Endothelial cell of umbilical vein (primary cell): ENCODE measurements at regions of chr13 and their contacts with region 1.

Region 1: GRCh38 chr13:28718543-28719226 is at the start of gene SLC46A3:
- DNase-seq: peak; percentile 99
- H3K4me3 ChIP-seq: peak within 1 kb of the TSS; percentile 43 to 61 (median 48)
- H3K27ac ChIP-seq: peak within 1 kb of the TSS; percentile 6
- H3K4me1 ChIP-seq: peaks cover 30% of the 10 kb centered on the region
- H3K27me3 ChIP-seq: no peaks in the 10 kb centered on the region
- CTCF ChIP-seq: peak in 1 of 2 donors; percentile 15
- POLR2A ChIP-seq: no peak
- total RNA-seq, gene SLC46A3: 2.1 and 3.9 TPM in 2 replicates

Region 2: DNA sequence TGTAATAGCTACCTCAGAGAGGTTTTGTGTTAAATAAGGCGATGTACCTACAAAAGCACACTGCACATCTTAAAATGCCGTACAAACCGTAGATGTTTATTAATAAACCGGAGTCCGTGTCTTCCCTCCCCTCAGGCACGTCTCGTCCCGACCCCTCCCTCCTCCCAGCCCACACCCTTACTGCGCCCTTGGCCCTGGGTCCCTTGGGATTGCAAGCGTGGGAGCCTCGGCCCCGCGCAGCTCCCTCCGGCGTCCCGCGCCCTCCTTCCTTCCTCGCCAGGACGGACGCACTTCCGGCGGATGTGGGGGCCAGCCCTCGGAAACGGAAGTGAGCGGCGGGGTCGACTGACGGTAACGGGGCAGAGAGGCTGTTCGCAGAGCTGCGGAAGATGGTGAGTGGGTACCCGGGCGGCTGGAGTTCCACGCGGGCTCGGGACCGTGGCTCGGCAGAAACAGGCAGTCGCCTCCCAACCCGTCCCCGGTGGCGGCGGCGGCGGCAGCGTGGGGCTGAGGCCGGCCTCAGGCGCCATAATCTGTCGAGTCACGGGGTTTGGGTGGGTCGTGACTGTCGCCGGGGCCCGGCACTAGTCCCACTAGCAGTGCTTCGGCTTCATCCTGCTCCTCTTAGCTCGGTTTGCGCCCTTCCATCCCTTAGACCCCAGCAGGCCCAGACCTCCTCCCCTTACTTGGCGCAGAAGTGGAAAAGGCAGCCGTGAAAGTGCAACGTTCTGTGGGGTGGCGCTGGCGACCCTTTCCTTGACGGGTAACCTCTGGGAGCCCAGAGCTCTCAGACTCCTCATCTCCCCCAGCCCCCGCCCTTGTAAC is 59.7 kb before region 1 on chr13 and contains the start of gene POMP:
- CTCF ChIA-PET with region 1: no interaction called
- POLR2A ChIA-PET with region 1: no interaction called
- dilution Hi-C with region 1: no loop called
- intact Hi-C with region 1: no loop called
- DNase-seq: peak; percentile 91
- H3K4me3 ChIP-seq: peak within 1 kb of the TSS; percentile 90 to 96 (median 96)
- H3K27ac ChIP-seq: peak within 1 kb of the TSS; percentile 99
- H3K4me1 ChIP-seq: peaks cover 20% of the 10 kb centered on the region
- H3K27me3 ChIP-seq: no peaks in the 10 kb centered on the region
- CTCF ChIP-seq: no peak
- POLR2A ChIP-seq: peak; percentile 43
- total RNA-seq, gene POMP: 88.9 and 105 TPM in 2 replicates

Region 3: DNA sequence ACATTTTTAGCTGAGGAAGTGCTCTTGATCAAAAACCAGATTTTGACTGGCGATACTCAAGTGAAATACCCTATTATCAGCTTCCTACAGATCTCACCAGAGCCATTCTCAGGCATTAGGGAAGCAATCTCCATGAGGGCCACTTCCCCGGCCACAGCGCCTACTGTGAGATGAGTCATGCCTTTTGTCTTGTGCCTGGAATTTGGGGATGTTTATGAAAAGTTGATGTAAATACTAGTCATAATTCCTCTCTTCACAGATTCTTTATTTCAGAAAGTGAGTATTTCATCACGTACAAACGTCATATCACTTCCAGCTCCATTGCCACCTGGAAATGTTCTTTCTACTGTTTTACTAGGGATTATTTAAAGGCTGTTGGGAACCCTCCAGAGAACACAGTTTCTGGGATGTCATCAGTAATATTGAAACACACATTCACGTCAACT is 25.4 kb after region 1 on chr13:
- CTCF ChIA-PET with region 1: interaction called, 7 read pairs
- POLR2A ChIA-PET with region 1: no interaction called
- dilution Hi-C with region 1: no loop called
- intact Hi-C with region 1: loop called (anchors 1 kb)
- DNase-seq: peak; percentile 96
- H3K4me3 ChIP-seq: no peak overlapping the region
- H3K27ac ChIP-seq: peak overlapping the region; percentile 39
- H3K4me1 ChIP-seq: peaks cover 11% of the 10 kb centered on the region
- H3K27me3 ChIP-seq: peaks cover 5 to 28% of the 10 kb centered on the region in 2 experiments
- CTCF ChIP-seq: no peak
- POLR2A ChIP-seq: no peak

Region 4: GRCh38 chr13:28754698-28755545 is 36.2 kb after region 1 on chr13:
- CTCF ChIA-PET with region 1: interaction called, 9 read pairs
- POLR2A ChIA-PET with region 1: no interaction called
- dilution Hi-C with region 1: no loop called
- intact Hi-C with region 1: loop called (anchors 1 kb)
- DNase-seq: peak; percentile 59
- H3K4me3 ChIP-seq: peak overlapping the region in 2 of 3 experiments; percentile 1 to 9
- H3K27ac ChIP-seq: no peak overlapping the region
- H3K4me1 ChIP-seq: peaks cover 30% of the 10 kb centered on the region
- H3K27me3 ChIP-seq: no peaks in the 10 kb centered on the region
- CTCF ChIP-seq: peak; percentile 4 to 13
- POLR2A ChIP-seq: no peak

Region 5: GRCh38 chr13:29210676-29211075 is 492.0 kb after region 1 on chr13:
- CTCF ChIA-PET with region 1: no interaction called
- POLR2A ChIA-PET with region 1: no interaction called
- dilution Hi-C with region 1: no loop called
- intact Hi-C with region 1: no loop called
- DNase-seq: no peak
- H3K4me3 ChIP-seq: no peak overlapping the region
- H3K27ac ChIP-seq: no peak overlapping the region
- H3K4me1 ChIP-seq: no peaks in the 10 kb centered on the region
- H3K27me3 ChIP-seq: no peaks in the 10 kb centered on the region
- CTCF ChIP-seq: no peak
- POLR2A ChIP-seq: no peak